Testis (tissue), 5 donors: ENCODE measurements at regions of chr3 and their contacts with region 1.

Region 1: DNA sequence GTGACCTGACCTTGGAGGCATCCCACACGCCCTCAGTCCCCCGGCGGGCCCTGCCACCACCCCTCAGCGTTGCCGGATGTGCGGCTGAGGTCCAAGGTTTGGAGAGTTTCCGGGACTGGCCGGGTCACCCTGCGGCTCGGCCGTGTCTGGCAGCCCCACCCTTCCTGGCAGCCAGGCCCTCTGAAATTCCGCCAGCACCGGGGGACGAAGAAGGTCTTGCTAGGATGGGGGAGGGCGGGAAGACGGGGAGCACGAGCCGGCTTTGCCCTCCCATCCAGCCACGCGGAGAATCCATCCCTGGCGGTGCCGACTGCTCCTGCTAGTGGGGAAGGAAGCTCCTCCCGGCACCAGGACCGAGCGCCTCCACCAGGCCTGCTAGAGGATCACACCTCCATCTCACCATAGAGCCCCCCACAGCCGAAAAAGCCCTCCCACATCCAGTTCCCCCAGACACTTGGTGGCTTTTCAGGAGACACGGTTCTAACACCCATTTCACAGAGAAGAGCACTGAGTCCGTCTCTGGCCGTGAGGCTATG is 81.5 kb downstream of the CPN2 start:
- DNase-seq: peak; percentile 91
- H3K4me3 ChIP-seq: peak overlapping the region in 1 of 2 donors; percentile 37
- H3K27ac ChIP-seq: peak overlapping the region; percentile 64 to 74
- H3K4me1 ChIP-seq: peaks cover 41% of the 10 kb centered on the region
- H3K27me3 ChIP-seq: no peaks in the 10 kb centered on the region
- CTCF ChIP-seq: peak; percentile 50 to 57 (median 51)
- POLR2A ChIP-seq: no peak

Region 2: GRCh38 chr3:194103983-194104751 is 165.5 kb before region 1 on chr3:
- intact Hi-C with region 1: no loop called
- DNase-seq: no peak
- H3K4me3 ChIP-seq: no peak overlapping the region
- H3K27ac ChIP-seq: no peak overlapping the region
- H3K4me1 ChIP-seq: no peaks in the 10 kb centered on the region
- H3K27me3 ChIP-seq: no peaks in the 10 kb centered on the region
- CTCF ChIP-seq: no peak
- POLR2A ChIP-seq: no peak

Region 3: DNA sequence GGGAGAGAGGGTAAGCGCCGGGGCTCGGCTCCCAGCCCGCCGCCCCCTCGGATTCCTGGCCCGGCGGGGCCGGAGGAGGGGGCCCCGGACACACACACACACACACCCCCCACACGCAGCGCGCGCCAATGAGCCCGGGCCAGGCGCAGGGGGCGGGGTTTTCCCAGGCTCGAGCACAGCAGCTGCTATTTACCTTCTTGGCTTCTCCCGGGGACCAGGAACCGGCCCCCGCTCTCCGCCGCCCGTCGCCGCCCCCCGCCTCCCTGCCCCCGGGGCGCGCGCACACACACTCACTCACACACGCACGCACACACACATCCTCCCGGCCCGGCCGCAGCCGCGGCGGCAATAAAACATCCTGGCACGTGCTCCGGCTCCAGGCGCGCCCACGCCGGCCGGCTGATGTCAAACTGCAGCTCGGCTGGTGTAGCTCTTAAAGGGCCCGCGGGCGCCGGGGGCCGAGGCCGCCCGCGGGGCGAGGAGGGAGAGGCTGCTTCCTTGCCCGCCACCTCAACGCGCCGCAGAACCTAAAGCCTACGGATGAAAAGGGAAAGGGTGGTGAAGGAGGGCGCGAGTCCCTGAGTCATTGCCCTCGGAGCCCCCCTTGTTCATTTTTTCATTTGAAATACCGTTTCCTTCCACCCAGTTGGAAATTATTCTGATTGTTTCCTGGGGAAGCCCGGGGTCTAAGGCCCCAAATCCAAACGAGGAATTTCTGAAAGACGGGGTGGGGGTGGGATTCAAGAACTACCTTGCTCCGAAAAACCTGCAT is 134.7 kb before region 1 on chr3:
- intact Hi-C with region 1: loop called (anchors 5 kb)
- DNase-seq: peak; percentile 94
- H3K4me3 ChIP-seq: peak overlapping the region; percentile 57 to 73
- H3K27ac ChIP-seq: peak overlapping the region; percentile 87 to 93
- H3K4me1 ChIP-seq: peaks cover 49% of the 10 kb centered on the region
- H3K27me3 ChIP-seq: no peaks in the 10 kb centered on the region
- CTCF ChIP-seq: no peak
- POLR2A ChIP-seq: no peak